H1 (cell line): ENCODE measurements at regions of chr3 and their contacts with region 1.

Region 1: DNA sequence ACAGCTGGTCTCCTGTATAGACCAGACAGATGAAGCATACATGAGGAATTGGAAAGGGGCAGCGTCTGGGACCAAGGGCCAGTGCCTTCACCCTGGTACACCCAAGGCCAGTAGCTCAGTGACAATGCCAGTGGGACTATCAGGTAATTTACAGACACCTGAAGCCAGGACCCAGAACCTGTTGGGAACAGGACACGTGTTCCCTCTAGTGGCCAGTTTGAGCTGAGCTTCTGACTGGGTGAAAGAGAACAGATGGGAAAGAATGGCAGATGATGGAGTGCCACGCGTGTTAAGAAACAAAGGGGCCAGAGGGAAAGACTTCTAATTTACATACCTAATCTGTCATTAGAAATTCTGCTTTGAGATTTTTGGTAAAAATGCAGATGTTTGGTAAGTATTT is 5.1 kb upstream of the SLC25A38 start:
- DNase-seq: peak in 1 of 2 experiments; percentile 69
- H3K4me3 ChIP-seq: no peak overlapping the region
- H3K27ac ChIP-seq: no peak overlapping the region
- H3K4me1 ChIP-seq: peaks cover 0 to 5% (median 0%) of the 10 kb centered on the region in 4 experiments; a peak in 2 of 7 replicates
- H3K27me3 ChIP-seq: no peaks in the 10 kb centered on the region
- CTCF ChIP-seq: peak; percentile 79 to 93 (median 90)
- EP300 ChIP-seq: no peak
- POLR2A ChIP-seq: no peak
- RAD21 ChIP-seq: peak; percentile 86 to 93

Region 2: GRCh38 chr3:39346785-39347585 is 31.1 kb before region 1 on chr3:
- CTCF ChIA-PET with region 1: interaction called, 15 read pairs
- POLR2A ChIA-PET with region 1: no interaction called
- DNase-seq: no peak
- H3K4me3 ChIP-seq: no peak overlapping the region
- H3K27ac ChIP-seq: no peak overlapping the region
- H3K4me1 ChIP-seq: peaks cover 0 to 4% (median 1%) of the 10 kb centered on the region in 4 experiments; a peak in 2 of 7 replicates
- H3K27me3 ChIP-seq: no peaks in the 10 kb centered on the region
- CTCF ChIP-seq: no peak
- EP300 ChIP-seq: no peak
- POLR2A ChIP-seq: no peak
- RAD21 ChIP-seq: no peak

Region 3: GRCh38 chr3:39428745-39429201 is 50.7 kb after region 1 on chr3:
- CTCF ChIA-PET with region 1: no interaction called
- POLR2A ChIA-PET with region 1: no interaction called
- DNase-seq: peak in 1 of 2 experiments; percentile 43
- H3K4me3 ChIP-seq: no peak overlapping the region
- H3K27ac ChIP-seq: no peak overlapping the region
- H3K4me1 ChIP-seq: no peaks in the 10 kb centered on the region
- H3K27me3 ChIP-seq: no peaks in the 10 kb centered on the region
- CTCF ChIP-seq: no peak
- EP300 ChIP-seq: no peak
- POLR2A ChIP-seq: no peak
- RAD21 ChIP-seq: no peak

Region 4: GRCh38 chr3:39453134-39453533 is 75.0 kb after region 1 on chr3:
- CTCF ChIA-PET with region 1: no interaction called
- POLR2A ChIA-PET with region 1: no interaction called
- DNase-seq: no peak
- H3K4me3 ChIP-seq: no peak overlapping the region
- H3K27ac ChIP-seq: no peak overlapping the region
- H3K4me1 ChIP-seq: no peaks in the 10 kb centered on the region
- H3K27me3 ChIP-seq: no peaks in the 10 kb centered on the region
- CTCF ChIP-seq: no peak
- EP300 ChIP-seq: no peak
- POLR2A ChIP-seq: no peak
- RAD21 ChIP-seq: no peak